HepG2 (cell line): ENCODE measurements at regions of chr21 and their contacts with region 1.

Region 1: GRCh38 chr21:35051287-35051818 is 2.3 kb upstream of the RUNX1 start:
- DNase-seq: peak; percentile 82
- ATAC-seq: peak; percentile 99
- H3K4me3 ChIP-seq: peak overlapping the region in 2 of 3 experiments; percentile 26 to 32; a peak in 1 of 6 replicates
- H3K27ac ChIP-seq: no peak overlapping the region
- H3K4me1 ChIP-seq: peaks cover 45% of the 10 kb centered on the region
- H3K27me3 ChIP-seq: no peaks in the 10 kb centered on the region
- CTCF ChIP-seq: peak; percentile 88
- EP300 ChIP-seq: peak in 1 of 2 experiments; percentile 19; a peak in 1 of 4 replicates
- POLR2A ChIP-seq: no peak
- RAD21 ChIP-seq: peak; percentile 83

Region 2: DNA sequence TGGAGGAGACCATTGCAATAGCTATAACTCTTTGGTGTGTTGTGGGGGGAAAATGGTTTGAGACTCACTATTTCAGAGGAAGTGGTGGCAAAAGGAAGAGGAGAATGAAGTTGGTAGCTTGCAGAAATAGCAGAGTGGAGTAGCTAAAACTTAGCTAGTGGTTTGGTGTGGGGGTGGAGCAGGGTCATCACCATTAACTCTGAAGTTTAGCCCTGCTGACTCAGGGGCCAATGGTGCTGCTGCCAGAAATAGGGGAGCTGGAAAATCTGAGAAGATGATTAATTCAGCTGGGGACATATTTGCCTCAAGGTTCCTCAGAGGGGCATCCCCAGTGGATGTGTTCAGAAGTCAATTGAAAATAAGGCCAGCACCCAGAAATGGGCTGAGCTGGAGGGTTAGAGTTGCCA is 67.7 kb before region 1 on chr21:
- CTCF ChIA-PET with region 1: no interaction called
- POLR2A ChIA-PET with region 1: no interaction called
- in situ Hi-C with region 1: no loop called
- intact Hi-C with region 1: no loop called
- DNase-seq: no peak
- ATAC-seq: no peak
- H3K4me3 ChIP-seq: no peak overlapping the region
- H3K27ac ChIP-seq: no peak overlapping the region
- H3K4me1 ChIP-seq: peaks cover 44% of the 10 kb centered on the region
- H3K27me3 ChIP-seq: no peaks in the 10 kb centered on the region
- CTCF ChIP-seq: no peak
- EP300 ChIP-seq: no peak
- POLR2A ChIP-seq: no peak
- RAD21 ChIP-seq: no peak

Region 3: DNA sequence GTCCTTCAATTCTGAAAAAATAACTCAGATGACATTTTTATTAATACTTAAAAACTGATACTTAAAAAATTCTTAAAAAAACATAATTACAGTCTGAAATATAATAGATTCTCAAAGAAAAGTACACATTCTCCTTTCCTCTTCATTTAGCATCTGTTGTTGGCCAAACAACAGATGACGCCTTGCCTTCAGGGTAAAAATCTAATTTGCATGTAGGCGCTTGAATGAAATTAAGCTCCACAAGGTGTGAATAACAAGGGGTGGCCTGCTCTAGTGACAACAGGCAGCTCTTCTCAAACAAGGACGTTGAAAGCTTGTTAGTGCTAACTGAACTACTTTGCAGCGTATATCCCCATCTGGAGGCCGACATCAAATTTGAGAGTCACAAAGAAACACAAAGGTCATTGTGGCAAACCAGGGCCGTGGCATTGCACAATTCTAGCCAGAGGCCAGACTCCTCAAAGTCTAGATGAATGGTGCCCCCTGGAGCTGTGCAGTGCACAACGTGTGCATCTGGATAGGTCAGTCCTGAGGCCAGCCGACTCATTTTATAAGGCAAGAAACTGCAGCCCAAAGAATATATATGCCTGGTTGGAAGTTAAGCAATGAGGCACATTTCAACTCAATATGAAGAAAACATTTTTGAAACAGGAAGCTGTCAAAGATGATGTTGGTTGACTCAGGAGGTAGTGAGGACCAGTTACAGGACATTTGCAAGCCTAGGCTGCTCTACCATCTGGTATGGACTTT is 457.0 kb after region 1 on chr21:
- CTCF ChIA-PET with region 1: no interaction called
- POLR2A ChIA-PET with region 1: no interaction called
- in situ Hi-C with region 1: no loop called
- intact Hi-C with region 1: loop called (anchors 10 kb)
- DNase-seq: peak; percentile 72
- ATAC-seq: peak; percentile 97
- H3K4me3 ChIP-seq: no peak overlapping the region
- H3K27ac ChIP-seq: no peak overlapping the region
- H3K4me1 ChIP-seq: peaks cover 7% of the 10 kb centered on the region; the same call in 1 of the 2 replicates
- H3K27me3 ChIP-seq: no peaks in the 10 kb centered on the region
- CTCF ChIP-seq: peak; percentile 75
- EP300 ChIP-seq: no peak
- POLR2A ChIP-seq: no peak
- RAD21 ChIP-seq: peak; percentile 59